ENCODE measurements at regions of chr1 and their contacts with region 1.

Region 1: GRCh38 chr1:208025031-208025430 is 114.1 kb upstream of the CD34 start:
- DNase-seq: no peak
- ATAC-seq: no peak
- H3K4me3 ChIP-seq: no peak overlapping the region
- H3K27ac ChIP-seq: no peak overlapping the region
- H3K4me1 ChIP-seq: no peaks in the 10 kb centered on the region
- H3K27me3 ChIP-seq: peaks cover 20% of the 10 kb centered on the region
- CTCF ChIP-seq: no peak
- POLR2A ChIP-seq: no peak
- RAD21 ChIP-seq: no peak

Region 2: DNA sequence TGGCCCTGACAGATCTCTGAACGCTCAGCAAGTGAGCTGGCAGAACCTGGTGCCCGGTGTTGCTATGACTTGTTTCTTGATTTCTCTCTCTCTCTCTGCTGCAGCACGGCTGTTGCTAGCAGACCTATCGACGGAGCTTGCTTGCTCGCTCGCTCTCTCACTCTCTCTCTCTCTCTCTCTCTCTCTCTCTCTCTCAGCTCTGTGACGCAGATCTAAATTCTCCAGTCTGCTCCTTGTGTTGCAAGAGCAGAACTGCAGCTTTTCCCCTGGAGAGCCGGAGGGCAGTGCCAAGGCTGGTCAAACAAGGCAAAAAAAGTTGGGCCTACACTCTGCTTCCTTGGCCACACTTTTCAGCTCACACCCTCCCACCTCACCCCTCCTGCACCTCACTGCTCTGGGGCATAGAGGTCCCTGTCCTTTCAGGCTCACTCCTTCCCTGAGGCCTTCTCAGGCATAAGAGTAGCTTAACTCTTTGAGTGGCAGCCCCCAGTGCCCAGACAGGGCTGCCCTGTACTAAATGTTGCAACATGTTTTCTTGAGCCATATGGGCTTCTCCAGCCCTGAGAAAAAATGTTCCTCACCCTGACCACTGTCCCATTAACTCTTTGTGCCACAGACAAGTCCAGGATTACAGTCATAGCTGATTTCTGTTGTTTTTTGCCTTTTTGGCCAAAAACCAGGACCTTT is 201.0 kb before region 1 on chr1:
- CTCF ChIA-PET with region 1: no interaction called
- POLR2A ChIA-PET with region 1: no interaction called
- RAD21 ChIA-PET with region 1: no interaction called
- intact Hi-C with region 1: no loop called
- DNase-seq: peak; percentile 37
- ATAC-seq: peak; percentile 70
- H3K4me3 ChIP-seq: no peak overlapping the region
- H3K27ac ChIP-seq: peak overlapping the region; percentile 30; the same call in 1 of the 2 replicates
- H3K4me1 ChIP-seq: peaks cover 8 to 11% of the 10 kb centered on the region in 2 experiments; a peak in 2 of 4 replicates
- H3K27me3 ChIP-seq: no peaks in the 10 kb centered on the region
- CTCF ChIP-seq: peak in 2 of 3 experiments; percentile 18 to 45; a peak in 2 of 6 replicates
- POLR2A ChIP-seq: no peak
- RAD21 ChIP-seq: no peak

Region 3: GRCh38 chr1:207952617-207953542 is 72.2 kb before region 1 on chr1:
- CTCF ChIA-PET with region 1: no interaction called
- POLR2A ChIA-PET with region 1: no interaction called
- RAD21 ChIA-PET with region 1: no interaction called
- intact Hi-C with region 1: no loop called
- DNase-seq: no peak
- ATAC-seq: no peak
- H3K4me3 ChIP-seq: no peak overlapping the region
- H3K27ac ChIP-seq: no peak overlapping the region
- H3K4me1 ChIP-seq: no peaks in the 10 kb centered on the region
- H3K27me3 ChIP-seq: peaks cover 20% of the 10 kb centered on the region; the same call in 1 of the 2 replicates
- CTCF ChIP-seq: no peak
- POLR2A ChIP-seq: no peak
- RAD21 ChIP-seq: no peak

Region 4: GRCh38 chr1:208045463-208046260 is 20.6 kb after region 1 on chr1:
- CTCF ChIA-PET with region 1: interaction called, 13 read pairs
- POLR2A ChIA-PET with region 1: no interaction called
- RAD21 ChIA-PET with region 1: no interaction called
- intact Hi-C with region 1: no loop called
- DNase-seq: peak; percentile 28
- ATAC-seq: peak; percentile 85
- H3K4me3 ChIP-seq: no peak overlapping the region
- H3K27ac ChIP-seq: no peak overlapping the region
- H3K4me1 ChIP-seq: no peaks in the 10 kb centered on the region
- H3K27me3 ChIP-seq: no peaks in the 10 kb centered on the region
- CTCF ChIP-seq: peak; percentile 83 to 95 (median 89)
- POLR2A ChIP-seq: no peak
- RAD21 ChIP-seq: peak; percentile 53

Region 5: DNA sequence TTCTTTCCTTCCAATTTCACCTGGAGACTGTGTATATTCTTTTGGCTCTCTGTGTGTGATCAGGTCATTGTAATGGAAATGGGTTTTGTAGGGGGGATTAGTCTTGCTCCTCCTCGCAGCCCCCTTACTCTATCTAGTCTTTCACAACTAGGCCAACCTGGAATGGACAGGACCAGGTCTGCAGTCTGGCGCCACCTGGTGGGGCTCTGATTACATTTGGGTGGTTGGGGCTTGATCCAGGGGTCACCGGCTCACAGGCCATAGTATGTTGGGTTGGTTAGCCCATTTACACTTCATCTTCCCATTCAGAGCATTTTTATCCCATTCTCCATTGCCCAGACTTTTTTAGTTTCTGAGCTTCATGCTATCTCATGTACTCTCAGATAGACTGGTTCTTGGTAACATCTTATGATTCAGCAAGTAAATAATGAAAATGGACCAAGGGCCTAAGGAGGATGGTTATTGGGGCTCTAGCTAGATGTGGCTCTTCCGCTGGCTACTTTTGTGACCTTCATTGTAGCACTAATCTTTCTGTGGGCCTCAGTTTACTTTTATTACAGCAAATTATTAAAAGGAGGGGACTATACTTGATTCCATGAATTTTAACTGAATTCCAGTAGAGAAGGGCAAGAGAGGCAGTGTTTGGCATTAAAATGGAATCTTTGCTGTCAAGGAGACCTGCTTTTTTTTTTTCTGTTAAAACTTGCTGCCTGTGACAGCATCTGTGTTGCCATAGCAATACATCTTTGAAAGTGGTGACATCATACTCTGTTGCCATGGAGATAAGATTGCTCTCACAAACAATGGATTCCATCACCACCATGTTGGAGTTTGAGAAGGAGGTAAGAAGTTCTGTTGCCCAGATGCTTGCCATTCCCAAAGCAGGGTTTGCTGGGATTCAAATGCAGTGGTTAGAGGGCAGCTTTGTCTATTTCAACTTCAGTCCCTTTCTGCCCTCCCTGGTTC is 69.0 kb after region 1 on chr1:
- CTCF ChIA-PET with region 1: interaction called, 18 read pairs
- POLR2A ChIA-PET with region 1: no interaction called
- RAD21 ChIA-PET with region 1: interaction called, 4 to 5 read pairs
- intact Hi-C with region 1: loop called (anchors 1 kb)
- DNase-seq: peak; percentile 31
- ATAC-seq: peak; percentile 95
- H3K4me3 ChIP-seq: no peak overlapping the region
- H3K27ac ChIP-seq: no peak overlapping the region
- H3K4me1 ChIP-seq: no peaks in the 10 kb centered on the region
- H3K27me3 ChIP-seq: no peaks in the 10 kb centered on the region
- CTCF ChIP-seq: peak; percentile 67 to 94 (median 85); a peak in 5 of 6 replicates
- POLR2A ChIP-seq: no peak
- RAD21 ChIP-seq: peak; percentile 60

Region 6: GRCh38 chr1:208238710-208239472 is 213.9 kb after region 1 on chr1:
- CTCF ChIA-PET with region 1: interaction called, 73 read pairs
- POLR2A ChIA-PET with region 1: no interaction called
- RAD21 ChIA-PET with region 1: interaction called, 5 to 8 read pairs
- intact Hi-C with region 1: no loop called
- DNase-seq: peak; percentile 7
- ATAC-seq: peak; percentile 71
- H3K4me3 ChIP-seq: no peak overlapping the region
- H3K27ac ChIP-seq: no peak overlapping the region
- H3K4me1 ChIP-seq: peaks cover 3 to 8% of the 10 kb centered on the region in 2 experiments; a peak in 1 of 4 replicates
- H3K27me3 ChIP-seq: peaks cover 59% of the 10 kb centered on the region
- CTCF ChIP-seq: peak; percentile 50 to 68 (median 54); a peak in 5 of 6 replicates
- POLR2A ChIP-seq: no peak
- RAD21 ChIP-seq: peak; percentile 53

Measured in HCT116 (cell line).